SK-N-SH (cell line): ENCODE measurements at regions of chr11 and their contacts with region 1.

Region 1: DNA sequence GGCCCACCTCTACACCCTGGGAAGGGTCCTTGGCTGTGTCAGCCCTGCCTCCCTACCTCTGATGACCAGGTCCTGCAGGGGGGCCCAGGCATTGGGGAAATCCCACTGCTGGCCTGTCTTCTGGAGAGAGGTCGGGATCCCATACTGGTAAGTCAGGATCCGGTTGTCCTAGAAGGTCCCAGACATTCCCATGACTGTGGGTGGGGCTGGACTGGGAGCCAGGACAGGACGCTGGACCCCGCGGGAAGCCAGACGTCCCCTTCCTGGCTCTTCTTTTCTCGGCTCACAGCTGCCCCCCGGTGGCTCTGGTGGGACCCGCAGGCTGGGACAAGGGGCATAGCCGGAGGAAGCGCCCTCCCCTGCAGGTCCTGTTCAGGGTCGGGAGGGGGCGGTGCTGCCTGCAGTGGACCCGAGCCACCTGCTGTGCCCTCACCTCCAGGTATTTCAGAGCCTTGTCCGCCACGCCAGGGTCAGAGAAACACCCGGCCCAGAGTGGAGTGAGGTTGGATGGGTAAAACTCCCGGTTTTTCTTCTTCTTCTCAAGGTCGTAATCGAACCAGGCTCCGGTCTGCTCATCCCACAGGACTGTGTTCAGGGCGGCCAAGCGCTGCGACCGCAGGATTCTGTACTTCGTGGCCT is 20.0 kb downstream of the TREH start:
- DNase-seq: peak; percentile 96
- H3K4me3 ChIP-seq: peak overlapping the region in 1 of 2 experiments; percentile 28; a peak in 1 of 4 replicates
- H3K27ac ChIP-seq: peak overlapping the region; percentile 6 to 48; a peak in 3 of 4 replicates
- H3K4me1 ChIP-seq: peaks cover 0 to 12% of the 10 kb centered on the region in 2 experiments; a peak in 1 of 4 replicates
- H3K27me3 ChIP-seq: no peaks in the 10 kb centered on the region
- CTCF ChIP-seq: peak; percentile 89
- EP300 ChIP-seq: no peak
- RAD21 ChIP-seq: peak; percentile 84

Region 2: DNA sequence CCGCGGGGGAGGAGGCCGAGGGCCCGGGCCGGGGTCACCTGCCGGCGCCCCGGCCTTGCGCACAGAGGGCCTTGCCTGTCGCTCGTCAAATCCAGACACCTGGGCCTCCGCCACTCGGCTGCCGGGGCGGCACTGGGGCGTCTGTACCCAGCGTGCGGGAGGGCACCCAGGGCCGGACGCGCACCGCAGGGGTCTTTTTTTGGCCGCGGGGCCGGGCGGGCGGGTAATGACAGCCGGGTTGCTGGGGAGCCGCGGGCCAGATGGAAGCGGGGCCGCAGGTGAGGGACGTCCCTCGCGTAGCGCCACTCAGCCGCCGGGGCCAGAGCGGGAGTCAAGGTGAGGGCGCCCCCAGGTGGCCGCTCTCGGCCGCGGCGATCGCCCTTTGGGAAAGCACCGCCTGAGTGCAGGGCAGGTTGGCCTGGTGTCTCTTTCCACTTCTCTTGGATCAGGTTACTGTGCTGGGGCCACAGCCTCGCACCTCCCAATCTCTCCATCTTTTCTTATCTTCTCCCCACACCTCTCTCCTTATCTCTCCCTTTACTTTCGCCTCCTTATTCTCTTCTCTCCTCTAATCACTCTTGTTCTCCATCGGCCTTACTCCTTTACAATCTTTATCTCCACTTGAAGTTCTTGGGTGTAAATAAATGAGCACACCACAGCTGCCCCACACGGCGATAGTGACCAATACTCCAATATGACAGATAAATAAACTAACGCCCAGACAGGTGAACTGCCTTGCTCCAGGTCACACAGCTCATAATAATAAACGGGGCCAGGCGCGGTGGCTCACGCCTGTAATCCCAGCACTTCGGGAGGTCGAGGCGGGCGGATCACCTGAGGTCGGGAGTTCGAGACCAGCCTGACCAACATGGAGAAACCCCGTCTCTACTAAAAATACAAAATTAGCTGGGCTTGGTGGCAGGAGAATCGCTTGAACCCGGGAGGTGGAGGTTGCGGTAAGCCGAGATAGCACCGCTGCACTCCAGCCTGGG is 48.3 kb before region 1 on chr11:
- CTCF ChIA-PET with region 1: interaction called, 79 read pairs
- POLR2A ChIA-PET with region 1: no interaction called
- DNase-seq: no peak
- H3K4me3 ChIP-seq: no peak overlapping the region; a peak in 1 of 4 replicates
- H3K27ac ChIP-seq: no peak overlapping the region
- H3K4me1 ChIP-seq: peaks cover 14 to 41% of the 10 kb centered on the region in 2 experiments
- H3K27me3 ChIP-seq: no peaks in the 10 kb centered on the region
- CTCF ChIP-seq: peak; percentile 54
- EP300 ChIP-seq: no peak
- RAD21 ChIP-seq: no peak

Region 3: DNA sequence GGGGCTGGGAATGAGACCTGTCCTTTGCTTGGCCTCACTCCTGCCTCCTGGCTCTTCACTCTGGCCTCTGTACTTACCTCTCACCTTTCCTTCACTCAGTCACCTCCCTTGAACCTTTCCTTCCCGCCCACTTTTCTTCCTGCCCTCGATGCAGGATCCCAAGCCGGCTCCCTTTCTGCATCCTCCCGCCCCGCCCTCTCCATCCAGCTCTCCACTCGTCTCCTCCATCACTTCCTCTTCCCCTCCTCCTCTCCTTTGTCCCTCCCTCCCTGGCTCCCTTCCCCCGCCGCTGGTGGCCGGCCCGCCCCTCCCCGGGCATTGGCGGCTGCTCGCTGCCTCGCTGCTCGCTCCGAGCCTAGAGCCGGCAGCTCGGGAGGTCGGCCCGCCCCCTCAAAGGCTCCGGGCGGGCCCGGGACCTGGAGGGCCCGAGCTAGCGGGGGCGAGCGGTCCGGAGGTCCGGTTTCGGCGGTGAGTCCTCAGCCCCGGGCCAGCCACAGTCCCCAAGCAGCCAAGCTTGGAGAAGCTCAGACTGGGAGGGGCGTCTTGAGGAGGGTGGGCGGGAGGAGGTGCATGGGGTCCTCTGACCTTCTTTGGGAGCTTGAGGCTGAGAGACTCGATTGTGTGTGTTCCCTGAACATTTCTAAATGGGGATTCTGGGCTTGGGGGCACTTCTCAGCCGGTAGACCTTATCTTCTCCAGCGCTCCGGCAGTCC is 38.2 kb before region 1 on chr11:
- CTCF ChIA-PET with region 1: interaction called, 45 read pairs
- POLR2A ChIA-PET with region 1: interaction called, 3 read pairs
- DNase-seq: peak; percentile 93
- H3K4me3 ChIP-seq: peak overlapping the region; percentile 79 to 95
- H3K27ac ChIP-seq: peak overlapping the region; percentile 97 to 100
- H3K4me1 ChIP-seq: peaks cover 44 to 66% of the 10 kb centered on the region in 2 experiments
- H3K27me3 ChIP-seq: no peaks in the 10 kb centered on the region
- CTCF ChIP-seq: no peak
- EP300 ChIP-seq: no peak
- RAD21 ChIP-seq: no peak

Region 4: DNA sequence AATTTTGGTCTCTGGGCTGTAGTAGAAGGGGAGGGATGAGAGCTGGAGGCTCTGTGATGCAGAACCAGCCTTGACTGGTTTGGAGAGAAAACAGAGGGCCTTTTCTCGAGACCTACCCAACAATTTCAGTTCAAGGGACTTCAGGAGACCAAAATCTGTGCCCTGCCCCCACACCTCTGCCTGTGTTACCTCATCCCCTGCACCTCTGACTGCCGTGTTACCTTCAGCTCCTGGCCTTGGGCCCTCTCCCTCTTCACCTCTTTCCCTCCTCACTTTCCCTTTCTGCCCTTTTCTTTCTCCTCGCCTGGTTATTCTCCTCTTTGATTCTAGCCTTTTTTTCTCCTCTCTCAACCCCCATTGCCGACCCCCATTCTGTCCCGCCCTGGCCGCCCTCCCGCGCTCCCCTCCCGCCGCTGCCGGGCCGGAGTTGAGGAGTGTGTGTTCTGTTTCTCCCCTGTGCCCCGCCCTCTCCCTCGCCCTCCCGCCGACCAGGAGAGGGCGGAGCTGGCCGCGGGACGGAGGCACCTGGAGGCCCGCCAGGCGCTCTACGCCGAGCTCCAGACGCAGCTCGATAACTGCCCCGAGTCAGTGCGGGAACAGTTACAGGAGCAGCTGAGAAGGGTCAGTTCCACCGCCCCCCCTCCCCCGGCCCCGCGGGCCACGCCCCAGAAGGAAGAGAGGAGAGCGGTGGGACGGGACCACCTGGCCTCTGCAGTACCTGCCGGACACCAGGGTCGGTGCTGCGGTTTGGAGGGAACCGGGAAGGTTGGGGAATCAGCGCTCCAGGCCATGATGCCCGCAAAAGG is 24.8 kb before region 1 on chr11:
- CTCF ChIA-PET with region 1: interaction called, 20 read pairs
- POLR2A ChIA-PET with region 1: no interaction called
- DNase-seq: peak; percentile 69
- H3K4me3 ChIP-seq: no peak overlapping the region
- H3K27ac ChIP-seq: peak overlapping the region in 1 of 2 experiments; percentile 40; a peak in 1 of 4 replicates
- H3K4me1 ChIP-seq: peaks cover 5 to 9% of the 10 kb centered on the region in 2 experiments; a peak in 2 of 4 replicates
- H3K27me3 ChIP-seq: no peaks in the 10 kb centered on the region
- CTCF ChIP-seq: no peak
- EP300 ChIP-seq: no peak
- RAD21 ChIP-seq: no peak

Region 5: GRCh38 chr11:118640332-118641154 is 18.9 kb before region 1 on chr11:
- CTCF ChIA-PET with region 1: interaction called, 20 read pairs
- POLR2A ChIA-PET with region 1: no interaction called
- DNase-seq: peak; percentile 52
- H3K4me3 ChIP-seq: no peak overlapping the region
- H3K27ac ChIP-seq: peak overlapping the region in 1 of 2 experiments; percentile 77; a peak in 1 of 4 replicates
- H3K4me1 ChIP-seq: peaks cover 0 to 34% of the 10 kb centered on the region in 2 experiments; a peak in 1 of 4 replicates
- H3K27me3 ChIP-seq: no peaks in the 10 kb centered on the region
- CTCF ChIP-seq: peak; percentile 21; the same call in 1 of the 2 replicates
- EP300 ChIP-seq: no peak
- RAD21 ChIP-seq: peak; percentile 69

Region 6: GRCh38 chr11:118672846-118673245 is 13.4 kb after region 1 on chr11:
- CTCF ChIA-PET with region 1: interaction called, 30 read pairs
- POLR2A ChIA-PET with region 1: no interaction called
- DNase-seq: no peak
- H3K4me3 ChIP-seq: no peak overlapping the region
- H3K27ac ChIP-seq: no peak overlapping the region
- H3K4me1 ChIP-seq: peaks cover 0 to 4% of the 10 kb centered on the region in 2 experiments; a peak in 1 of 4 replicates
- H3K27me3 ChIP-seq: no peaks in the 10 kb centered on the region
- CTCF ChIP-seq: no peak
- EP300 ChIP-seq: no peak
- RAD21 ChIP-seq: no peak